Activated CD4-positive, alpha-beta memory T cell treated with anti-CD3 and anti-CD28 coated beads, Interleukin-2, amount 10 ng/mL, durations not matched to agents 7 days and 5 days (primary cell): ENCODE measurements at regions of chr1 and their contacts with region 1.

Region 1: DNA sequence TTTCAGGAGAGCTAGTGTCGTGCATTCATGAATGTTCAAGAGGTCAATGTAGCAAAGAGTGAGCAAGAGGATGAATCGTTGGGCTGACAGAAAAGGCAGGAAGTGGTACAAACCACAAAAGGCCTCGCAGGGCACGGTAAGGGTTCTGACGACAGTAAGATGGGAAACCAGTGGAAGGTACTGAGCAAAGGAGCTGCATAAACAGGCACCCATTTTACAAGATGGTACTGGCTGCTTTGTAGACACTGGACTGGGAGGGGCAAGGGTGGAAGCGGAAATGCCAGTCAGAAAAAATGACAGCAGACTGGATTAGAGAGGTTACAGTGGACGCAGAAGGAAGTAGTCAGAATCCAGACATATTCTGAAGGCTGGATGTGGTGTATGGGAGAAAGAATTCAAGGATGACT is 123.5 kb downstream of the PTPN14 start:
- DNase-seq: peak; percentile 89
- H3K4me3 Mint-ChIP-seq: peak overlapping the region; percentile 43
- H3K27ac Mint-ChIP-seq: peak overlapping the region; percentile 94
- H3K4me1 Mint-ChIP-seq: peaks cover 29% of the 10 kb centered on the region
- H3K27me3 Mint-ChIP-seq: no peaks in the 10 kb centered on the region

Region 2: DNA sequence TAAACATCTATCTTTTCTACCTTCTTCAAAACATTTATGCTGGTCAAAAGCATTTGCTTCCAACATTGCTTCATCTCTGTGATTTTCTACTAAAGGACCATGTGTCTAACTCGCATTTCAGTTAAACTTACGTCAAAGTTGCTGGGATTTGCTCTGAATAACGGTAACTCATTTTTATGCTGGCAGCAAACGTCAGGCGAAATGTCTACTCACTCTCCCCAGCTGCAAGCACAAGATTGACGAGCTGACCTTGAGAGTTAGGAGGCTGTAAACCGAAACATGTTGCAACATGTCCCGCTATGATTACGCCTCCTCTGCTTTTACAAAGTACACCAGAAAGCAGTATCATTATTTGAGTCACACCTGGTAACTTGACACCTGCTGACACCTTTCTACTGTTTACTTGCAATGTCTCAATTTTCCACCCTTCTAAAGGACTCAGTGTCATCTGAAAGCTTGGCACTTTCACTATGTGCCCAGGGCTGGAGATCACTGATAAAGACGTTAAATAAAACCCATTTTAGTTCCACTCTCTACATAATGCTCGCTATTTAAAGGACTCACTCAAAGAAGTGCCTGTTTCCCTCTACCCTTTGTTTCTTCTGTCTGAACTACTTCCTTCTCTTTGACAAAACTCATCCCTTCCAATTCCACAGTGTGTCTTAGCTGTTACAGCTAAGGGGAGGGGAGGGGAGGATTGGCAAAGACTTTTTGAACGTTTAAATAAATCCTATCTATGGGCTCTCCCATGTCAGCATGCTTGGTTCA is 11.7 kb after region 1 on chr1:
- CTCF ChIA-PET with region 1: no interaction called
- POLR2A ChIA-PET with region 1: interaction called, 24 read pairs
- DNase-seq: peak; percentile 54
- H3K4me3 Mint-ChIP-seq: peak overlapping the region; percentile 64
- H3K27ac Mint-ChIP-seq: peak overlapping the region; percentile 83
- H3K4me1 Mint-ChIP-seq: peaks cover 50% of the 10 kb centered on the region
- H3K27me3 Mint-ChIP-seq: peaks cover 4% of the 10 kb centered on the region

Region 3: DNA sequence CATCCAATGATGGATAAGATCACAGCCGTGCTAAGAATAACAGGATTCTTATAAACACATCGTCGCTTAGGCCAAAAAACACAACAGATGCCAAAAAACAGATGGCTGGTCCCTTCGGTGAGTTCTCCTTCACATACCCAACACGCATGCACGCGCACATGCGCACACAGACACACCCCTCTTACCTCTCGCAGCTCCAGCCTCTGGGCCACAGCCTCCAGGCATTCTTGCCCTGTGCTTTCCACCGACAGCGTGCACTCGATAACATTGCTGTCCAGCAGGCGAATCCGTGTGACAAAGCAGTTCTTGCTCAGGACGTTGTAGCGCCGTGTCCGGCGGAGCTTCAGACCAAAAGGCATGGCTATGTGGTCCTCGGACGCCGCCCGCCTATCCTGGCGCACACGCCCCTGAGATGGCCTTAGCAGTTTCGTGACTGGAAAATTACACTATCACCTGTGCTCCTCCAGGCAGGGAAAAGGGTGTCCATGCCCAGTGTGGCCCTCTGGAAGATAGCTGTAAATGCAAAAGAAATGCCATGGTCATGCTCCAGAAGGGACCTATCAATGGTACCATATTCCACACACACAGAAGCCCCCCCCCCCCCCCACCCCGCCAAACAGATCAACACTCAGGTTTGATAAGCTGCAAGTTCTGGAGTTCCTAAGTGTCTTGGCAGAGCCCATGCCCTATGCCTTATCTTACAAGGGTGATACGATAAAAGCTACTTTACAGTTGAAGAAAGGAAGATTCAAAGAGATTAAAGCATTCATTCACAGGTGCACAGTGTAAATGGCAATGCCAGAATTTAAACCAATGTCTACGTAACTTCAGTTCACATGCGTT is 36.8 kb after region 1 on chr1:
- CTCF ChIA-PET with region 1: no interaction called
- POLR2A ChIA-PET with region 1: no interaction called
- DNase-seq: no peak
- H3K4me3 Mint-ChIP-seq: no peak overlapping the region
- H3K27ac Mint-ChIP-seq: no peak overlapping the region
- H3K4me1 Mint-ChIP-seq: no peaks in the 10 kb centered on the region
- H3K27me3 Mint-ChIP-seq: peaks cover 8% of the 10 kb centered on the region